ENCODE measurements at regions of chr11 and their contacts with region 1.

Region 1: DNA sequence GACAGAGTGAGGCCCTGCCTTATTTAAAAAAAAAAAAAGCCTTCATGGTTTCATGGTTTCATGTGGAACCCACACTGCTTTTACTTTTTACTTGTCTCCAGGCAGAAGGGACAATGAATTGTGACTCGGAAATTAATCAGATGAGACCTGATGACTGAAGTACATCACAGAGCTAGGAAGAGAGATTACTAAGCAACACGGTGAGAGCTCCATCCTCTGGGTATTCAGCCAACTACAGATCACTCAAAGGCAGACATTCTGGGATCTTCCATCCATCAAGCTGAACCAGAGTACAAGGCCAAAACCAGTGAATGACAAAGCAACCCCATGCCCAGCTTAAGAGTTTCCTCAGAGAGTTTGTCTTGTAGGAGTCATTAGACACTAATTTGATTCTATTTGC is 433.2 kb downstream of the SOX6 start:
- DNase-seq: no peak
- ATAC-seq: peak; percentile 73
- H3K4me3 Mint-ChIP-seq: no peak overlapping the region
- H3K27ac Mint-ChIP-seq: no peak overlapping the region
- H3K4me1 Mint-ChIP-seq: no peaks in the 10 kb centered on the region
- H3K27me3 Mint-ChIP-seq: no peaks in the 10 kb centered on the region
- CTCF ChIP-seq: no peak

Region 2: GRCh38 chr11:15826826-15827225 is 96.4 kb before region 1 on chr11:
- CTCF ChIA-PET with region 1: interaction called, 12 read pairs
- POLR2A ChIA-PET with region 1: no interaction called
- DNase-seq: peak; percentile 93
- ATAC-seq: peak; percentile 98
- H3K4me3 Mint-ChIP-seq: no peak overlapping the region
- H3K27ac Mint-ChIP-seq: no peak overlapping the region
- H3K4me1 Mint-ChIP-seq: peaks cover 29% of the 10 kb centered on the region
- H3K27me3 Mint-ChIP-seq: no peaks in the 10 kb centered on the region; the same call in 1 of the 2 replicates
- CTCF ChIP-seq: peak; percentile 85

Region 3: DNA sequence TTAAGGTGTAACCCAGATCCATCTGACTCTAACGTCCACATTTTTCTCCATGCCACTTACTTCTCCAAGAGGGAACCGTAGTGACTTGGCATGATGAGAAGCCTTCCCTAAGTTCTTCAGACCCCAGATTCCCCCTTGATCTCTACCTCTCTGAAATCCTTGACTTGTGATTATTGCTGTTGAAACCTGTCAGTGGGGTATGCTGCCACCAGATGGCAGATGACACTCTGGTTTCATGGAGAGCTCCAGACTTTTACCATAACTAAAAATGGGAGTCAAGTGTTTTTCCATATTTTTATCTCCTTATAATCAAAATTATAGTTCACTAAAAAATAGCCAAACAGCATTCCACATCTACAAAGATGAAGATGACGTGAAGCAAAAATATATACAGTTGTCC is 71.0 kb before region 1 on chr11:
- CTCF ChIA-PET with region 1: interaction called, 14 read pairs
- POLR2A ChIA-PET with region 1: no interaction called
- DNase-seq: peak; percentile 26
- ATAC-seq: peak; percentile 56; the same call in 1 of the 2 replicates
- H3K4me3 Mint-ChIP-seq: no peak overlapping the region
- H3K27ac Mint-ChIP-seq: no peak overlapping the region
- H3K4me1 Mint-ChIP-seq: peaks cover 14% of the 10 kb centered on the region
- H3K27me3 Mint-ChIP-seq: no peaks in the 10 kb centered on the region; the same call in 1 of the 2 replicates
- CTCF ChIP-seq: peak; percentile 40; the same call in 1 of the 2 replicates

Region 4: GRCh38 chr11:15941201-15941770 is 18.1 kb after region 1 on chr11:
- CTCF ChIA-PET with region 1: interaction called, 10 read pairs
- POLR2A ChIA-PET with region 1: no interaction called
- DNase-seq: peak; percentile 82
- ATAC-seq: peak; percentile 87
- H3K4me3 Mint-ChIP-seq: no peak overlapping the region
- H3K27ac Mint-ChIP-seq: no peak overlapping the region
- H3K4me1 Mint-ChIP-seq: peaks cover 3% of the 10 kb centered on the region
- H3K27me3 Mint-ChIP-seq: peaks cover 29% of the 10 kb centered on the region
- CTCF ChIP-seq: peak; percentile 99

Region 5: DNA sequence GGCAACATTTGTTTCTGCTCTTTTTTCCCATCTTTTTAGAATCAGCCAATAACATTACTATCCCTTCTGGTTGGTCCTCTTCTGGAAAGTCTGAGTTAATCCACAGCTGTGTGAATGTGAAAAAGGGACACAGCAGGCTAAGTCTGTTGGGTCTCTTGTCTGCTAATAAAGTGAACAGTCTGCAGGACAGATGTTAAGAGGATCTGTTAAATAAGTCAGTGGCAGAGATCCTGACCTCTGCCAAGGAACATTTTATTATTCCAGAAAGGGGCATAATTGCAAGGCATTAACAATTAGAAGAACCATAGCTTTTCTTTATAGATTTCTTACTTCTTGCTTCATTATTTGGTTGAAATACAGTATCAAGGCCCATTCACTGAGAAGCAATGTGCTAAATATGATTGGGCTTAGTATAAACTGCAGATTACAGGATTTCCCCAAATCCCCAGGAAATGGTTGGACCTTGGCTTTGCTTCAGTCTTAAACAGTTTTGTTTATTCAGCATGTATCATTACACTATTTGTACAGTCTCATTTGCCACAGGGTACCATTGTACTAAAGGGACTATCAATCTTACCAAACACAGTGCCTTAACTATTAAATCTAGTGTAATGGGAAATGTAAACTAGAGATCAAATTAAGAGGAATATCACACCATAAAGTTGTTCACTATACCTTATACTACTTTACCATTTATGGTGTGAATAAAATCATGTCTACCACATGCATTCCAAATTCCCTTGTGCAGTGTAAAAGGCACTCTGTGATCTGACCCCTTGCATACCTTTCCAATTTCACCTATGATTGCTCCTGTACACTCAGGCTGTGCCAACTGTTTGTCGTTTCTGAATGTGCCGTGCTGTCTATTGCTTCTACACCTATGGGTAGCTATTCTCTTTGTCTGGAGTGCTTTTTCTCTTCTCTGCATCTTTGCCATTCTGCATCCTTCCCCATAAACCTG is 159.2 kb after region 1 on chr11:
- CTCF ChIA-PET with region 1: no interaction called
- POLR2A ChIA-PET with region 1: no interaction called
- DNase-seq: no peak
- ATAC-seq: no peak
- H3K4me3 Mint-ChIP-seq: no peak overlapping the region
- H3K27ac Mint-ChIP-seq: no peak overlapping the region
- H3K4me1 Mint-ChIP-seq: no peaks in the 10 kb centered on the region
- H3K27me3 Mint-ChIP-seq: no peaks in the 10 kb centered on the region
- CTCF ChIP-seq: no peak

Measured in WTC11 (cell line).